Heart left ventricle (tissue), 16 donors: ENCODE measurements at regions of chr11 and their contacts with region 1.

Region 1: DNA sequence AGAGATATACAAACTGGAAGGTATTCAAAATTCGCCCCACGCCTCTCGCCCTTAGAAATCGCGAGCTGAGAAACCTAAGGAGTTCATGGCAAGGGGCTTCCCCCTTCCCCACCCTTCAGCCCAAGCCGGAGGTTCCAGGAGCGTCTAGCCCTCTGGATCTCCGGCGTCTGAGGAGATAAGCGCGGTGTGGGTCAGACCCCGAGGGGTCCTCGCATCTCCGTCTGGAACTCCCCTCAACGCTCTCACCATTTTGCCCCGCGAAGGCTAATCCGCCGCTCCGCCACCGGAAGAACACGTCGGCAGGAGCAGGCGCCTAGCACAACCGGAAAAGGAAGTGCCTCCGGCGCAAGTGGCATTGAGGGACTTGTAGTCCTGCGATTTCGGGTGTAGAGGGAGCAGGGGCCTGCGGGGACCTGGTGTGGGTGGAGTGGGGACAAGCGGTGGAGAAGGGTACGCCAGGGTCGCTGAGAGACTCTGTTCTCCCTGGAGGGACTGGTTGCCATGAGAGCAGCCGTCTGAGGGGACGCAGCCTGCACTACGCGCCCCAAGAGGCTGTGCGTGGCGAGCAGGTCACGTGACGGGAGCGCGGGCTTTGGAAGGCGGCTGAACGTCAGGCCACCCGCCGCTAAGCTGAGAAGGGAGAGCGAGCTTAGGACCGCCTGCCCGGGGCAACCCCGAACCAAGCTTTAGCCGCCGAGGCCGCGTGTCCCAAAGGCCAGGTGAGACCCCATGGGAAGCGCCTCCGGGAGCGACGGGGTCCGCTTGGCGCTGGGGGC is at the starts of genes FEN1 and TMEM258:
- DNase-seq: peak; percentile 89 to 94 (median 93)
- ATAC-seq: peak; percentile 88 to 94 (median 93)
- H3K4me3 ChIP-seq: peak within 1 kb of the TSS; percentile 62 to 92 (median 72)
- H3K27ac ChIP-seq: peak within 1 kb of the TSS; percentile 89 to 99 (median 96)
- H3K4me1 ChIP-seq: peaks cover 6 to 26% (median 19%) of the 10 kb centered on the region in 12 donors
- H3K27me3 ChIP-seq: no peaks in the 10 kb centered on the region
- CTCF ChIP-seq: peak in 2 of 12 donors; percentile 8 to 10
- POLR2A ChIP-seq: peak in 1 of 2 donors; percentile 62
- total RNA-seq, gene FEN1: 3.9 to 13.7 (median 6.8) TPM
- total RNA-seq, gene TMEM258: 48.0 to 129 (median 103) TPM

Region 2: DNA sequence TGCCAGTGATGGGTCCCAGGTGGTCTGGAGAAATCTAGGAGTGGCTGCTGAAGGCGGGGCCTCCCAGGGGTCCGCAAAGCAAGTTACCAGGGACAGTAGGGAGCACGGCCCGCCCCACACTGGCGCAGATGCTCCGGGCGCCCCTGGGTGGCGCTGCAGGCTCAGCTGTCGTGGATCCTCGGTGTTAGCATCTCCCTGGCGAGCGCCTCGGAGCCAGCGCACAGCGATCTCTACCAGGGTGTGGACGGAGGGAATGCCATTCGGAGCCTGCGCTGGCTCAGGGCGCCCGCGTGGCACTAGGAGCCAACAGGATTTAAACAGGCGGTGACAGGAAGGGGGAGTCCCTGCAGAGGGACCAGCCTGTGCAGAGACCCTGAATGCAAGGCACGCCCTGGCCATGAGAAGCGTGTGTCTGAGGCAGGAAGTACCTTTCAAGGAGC is 78.7 kb after region 1 on chr11:
- intact Hi-C with region 1: loop called in 4 of 10 experiments (anchors 1 to 5 kb)
- DNase-seq: peak; percentile 80 to 92 (median 88)
- ATAC-seq: peak; percentile 79 to 90 (median 84)
- H3K4me3 ChIP-seq: peak overlapping the region in 7 of 12 donors; percentile 11 to 41 (median 20)
- H3K27ac ChIP-seq: peak overlapping the region in 9 of 12 donors; percentile 1 to 82 (median 56)
- H3K4me1 ChIP-seq: peaks cover 2 to 48% (median 20%) of the 10 kb centered on the region in 12 donors
- H3K27me3 ChIP-seq: no peaks in the 10 kb centered on the region
- CTCF ChIP-seq: peak; percentile 88 to 98 (median 94)
- POLR2A ChIP-seq: peak in 1 of 2 donors; percentile 13

Region 3: DNA sequence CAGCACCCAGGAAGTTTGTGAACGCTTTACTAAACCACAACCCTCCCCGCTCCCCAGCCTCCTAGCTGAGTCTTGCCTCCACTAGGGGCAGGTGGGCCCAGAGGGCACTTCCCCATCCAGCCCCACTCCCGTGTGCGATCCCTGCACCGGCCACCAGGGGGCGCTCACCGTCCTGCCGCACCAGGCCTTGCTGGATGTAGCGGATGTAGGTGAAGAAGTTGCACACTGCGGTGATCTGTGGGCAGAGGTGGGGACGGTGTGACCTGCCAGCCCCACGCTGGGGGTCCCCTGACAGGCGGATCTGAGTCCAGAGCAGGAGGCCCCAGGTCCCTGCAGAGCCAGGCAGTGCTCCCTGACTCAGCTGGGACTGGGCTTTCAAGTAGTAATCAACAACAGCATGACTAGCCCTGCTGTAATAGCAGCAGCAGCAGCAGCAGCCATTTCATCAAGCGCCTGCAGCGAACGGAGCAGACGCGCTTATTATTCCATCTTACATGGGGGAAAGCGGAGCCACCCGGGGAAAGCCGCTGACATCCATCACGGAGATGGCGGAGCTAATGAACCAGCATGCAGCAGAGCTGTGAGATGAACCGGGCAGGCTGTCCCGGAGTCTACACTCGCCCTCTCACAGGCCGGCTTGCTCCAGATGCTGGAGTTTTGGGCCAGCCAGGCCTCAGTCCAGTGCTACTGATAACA is 106.8 kb after region 1 on chr11:
- intact Hi-C with region 1: loop called (anchors 2 to 5 kb)
- DNase-seq: peak; percentile 72 to 93 (median 83)
- ATAC-seq: peak; percentile 70 to 85 (median 81)
- H3K4me3 ChIP-seq: no peak overlapping the region
- H3K27ac ChIP-seq: peak overlapping the region in 5 of 12 donors; percentile 2 to 36 (median 11)
- H3K4me1 ChIP-seq: peaks cover 0 to 22% (median 3%) of the 10 kb centered on the region in 12 donors
- H3K27me3 ChIP-seq: no peaks in the 10 kb centered on the region
- CTCF ChIP-seq: peak; percentile 99 to 100 (median 100)
- POLR2A ChIP-seq: no peak

Region 4: GRCh38 chr11:61967116-61967923 is 174.8 kb after region 1 on chr11 and contains the start of gene FTH1:
- intact Hi-C with region 1: loop called in 1 of 10 experiments (anchors 5 kb)
- DNase-seq: peak; percentile 94 to 97 (median 94)
- ATAC-seq: peak; percentile 33 to 86 (median 76)
- H3K4me3 ChIP-seq: peak within 1 kb of the TSS; percentile 66 to 98 (median 92)
- H3K27ac ChIP-seq: peak within 1 kb of the TSS; percentile 94 to 100 (median 99)
- H3K4me1 ChIP-seq: peaks cover 21 to 82% (median 60%) of the 10 kb centered on the region in 12 donors
- H3K27me3 ChIP-seq: no peaks in the 10 kb centered on the region
- CTCF ChIP-seq: no peak
- POLR2A ChIP-seq: peak; percentile 77 to 100
- total RNA-seq, gene FTH1: 1,764 to 5,397 (median 2,454) TPM

Region 5: GRCh38 chr11:62108017-62108750 is 315.7 kb after region 1 on chr11:
- intact Hi-C with region 1: loop called (anchors 2 to 5 kb)
- DNase-seq: peak in 2 of 5 donors; percentile 39 to 59
- ATAC-seq: peak in 2 of 4 donors; percentile 50 to 51
- H3K4me3 ChIP-seq: no peak overlapping the region
- H3K27ac ChIP-seq: peak overlapping the region in 5 of 12 donors; percentile 14 to 70 (median 27)
- H3K4me1 ChIP-seq: peaks cover 4 to 51% (median 20%) of the 10 kb centered on the region in 12 donors
- H3K27me3 ChIP-seq: no peaks in the 10 kb centered on the region
- CTCF ChIP-seq: peak; percentile 78 to 91 (median 82)
- POLR2A ChIP-seq: no peak

Region 6: GRCh38 chr11:62370743-62371440 is 578.4 kb after region 1 on chr11:
- intact Hi-C with region 1: loop called in 1 of 10 experiments (anchors 10 kb)
- DNase-seq: peak in 2 of 5 donors; percentile 45 to 57
- ATAC-seq: peak in 1 of 4 donors; percentile 22
- H3K4me3 ChIP-seq: peak overlapping the region in 1 of 12 donors; percentile 43
- H3K27ac ChIP-seq: peak overlapping the region in 1 of 12 donors; percentile 70
- H3K4me1 ChIP-seq: no peaks in the 10 kb centered on the region
- H3K27me3 ChIP-seq: no peaks in the 10 kb centered on the region
- CTCF ChIP-seq: no peak
- POLR2A ChIP-seq: no peak